Activated CD8-positive, alpha-beta T cell treated with anti-CD3 and anti-CD28 coated beads, Interleukin-2, amount 10 ng/mL, durations not matched to agents 7 days and 5 days (primary cell): ENCODE measurements at regions of chr7 and their contacts with region 1.

Region 1: GRCh38 chr7:2508327-2509215 is 11.0 kb upstream of the LFNG start:
- DNase-seq: peak; percentile 92
- ATAC-seq: peak; percentile 76
- H3K4me3 Mint-ChIP-seq: peak overlapping the region; percentile 70
- H3K27ac Mint-ChIP-seq: peak overlapping the region; percentile 92
- H3K4me1 Mint-ChIP-seq: peaks cover 62% of the 10 kb centered on the region
- H3K27me3 Mint-ChIP-seq: no peaks in the 10 kb centered on the region

Region 2: DNA sequence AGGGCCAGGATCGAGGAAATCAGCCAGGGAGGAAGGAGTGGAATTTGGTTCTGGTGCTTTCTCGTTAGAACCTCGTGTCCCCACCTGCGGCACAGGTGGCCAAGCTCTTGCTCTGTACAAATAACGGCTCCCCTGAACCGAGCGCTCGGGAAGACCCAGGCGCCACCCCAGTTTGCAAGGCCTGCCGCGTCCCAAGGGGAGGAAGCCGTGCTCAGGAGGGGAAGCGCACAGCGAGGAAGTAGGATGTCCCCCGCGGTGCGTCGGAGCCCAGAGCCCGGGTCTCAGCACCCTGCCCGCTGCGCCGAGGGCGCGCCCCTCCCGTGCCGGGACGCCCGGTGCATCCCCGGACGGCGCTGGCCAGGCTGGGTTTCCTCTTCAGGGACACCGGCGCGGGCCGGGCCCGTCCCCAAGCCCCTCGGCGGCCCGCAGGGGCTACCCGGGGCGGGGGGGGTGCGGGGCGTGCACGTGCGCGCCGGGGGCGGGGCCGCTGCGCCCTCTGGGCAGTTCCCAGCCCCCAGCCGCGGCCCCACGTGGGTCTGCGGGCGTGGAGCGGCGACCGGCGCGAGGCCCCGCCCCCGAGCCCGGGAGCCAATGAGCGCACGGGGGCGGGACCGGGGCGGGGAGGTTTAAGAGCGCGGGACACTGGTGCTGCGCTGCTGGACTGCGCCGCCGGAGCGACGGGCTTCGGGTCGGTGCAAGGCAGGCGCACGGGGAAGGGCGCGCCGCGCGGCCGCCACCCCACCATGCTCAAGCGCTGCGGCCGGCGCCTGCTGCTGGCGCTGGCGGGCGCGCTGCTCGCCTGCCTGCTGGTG is 10.8 kb after region 1 on chr7 and contains the start of gene LFNG:
- CTCF ChIA-PET with region 1: interaction called, 7 read pairs
- POLR2A ChIA-PET with region 1: interaction called, 57 read pairs
- DNase-seq: peak; percentile 90
- ATAC-seq: peak; percentile 75
- H3K4me3 Mint-ChIP-seq: peak within 1 kb of the TSS; percentile 98
- H3K27ac Mint-ChIP-seq: peak within 1 kb of the TSS; percentile 87
- H3K4me1 Mint-ChIP-seq: peaks cover 29% of the 10 kb centered on the region
- H3K27me3 Mint-ChIP-seq: no peaks in the 10 kb centered on the region
- total RNA-seq, gene LFNG: 134 to 136 TPM

Region 3: DNA sequence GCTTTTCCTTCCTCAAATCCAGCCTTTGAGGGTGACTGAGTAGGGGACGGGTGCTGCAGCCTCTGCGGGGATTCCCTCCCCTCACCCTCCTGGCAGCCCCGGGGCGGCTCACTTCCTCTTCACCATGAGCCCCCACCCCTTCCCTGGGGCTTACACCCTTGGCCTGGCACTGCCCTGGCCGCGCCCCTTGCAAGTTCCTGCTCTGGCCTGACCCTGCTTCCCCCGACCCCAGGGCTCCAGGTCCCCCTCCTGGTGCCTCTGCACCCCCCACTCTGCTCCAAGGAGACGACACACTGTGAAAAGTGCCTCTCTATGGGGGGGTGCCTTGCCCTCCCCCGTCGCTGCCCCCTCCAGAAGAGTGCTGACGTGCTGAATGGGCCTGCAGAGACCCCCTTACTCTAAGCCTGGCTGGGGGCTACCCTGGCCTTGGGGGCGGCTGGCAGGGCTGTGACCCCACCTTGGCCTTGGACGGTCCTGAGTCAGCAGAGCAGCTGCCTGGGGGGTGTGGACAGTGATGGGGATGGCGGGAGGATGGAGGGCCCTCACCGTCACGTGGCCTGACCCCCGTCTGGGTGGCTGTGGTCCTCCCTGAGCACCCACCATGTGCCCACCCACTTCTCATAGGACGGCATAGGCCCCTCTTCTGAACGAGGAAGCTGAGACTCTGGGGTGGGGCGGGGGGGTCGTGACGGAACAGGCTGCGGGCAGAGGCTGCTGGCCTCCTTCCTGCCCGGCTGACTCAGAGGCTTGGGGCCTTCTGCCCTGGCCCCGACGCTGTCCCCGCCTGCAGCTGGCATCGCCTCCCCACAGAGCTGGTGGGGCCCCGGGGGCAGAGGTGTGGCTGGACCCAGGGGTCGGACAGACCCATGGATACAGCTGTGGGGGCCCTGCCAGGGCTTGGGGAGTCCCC is 20.8 kb after region 1 on chr7:
- CTCF ChIA-PET with region 1: interaction called, 5 read pairs
- POLR2A ChIA-PET with region 1: interaction called, 12 read pairs
- DNase-seq: peak; percentile 69
- ATAC-seq: peak; percentile 34
- H3K4me3 Mint-ChIP-seq: peak overlapping the region; percentile 68
- H3K27ac Mint-ChIP-seq: peak overlapping the region; percentile 90
- H3K4me1 Mint-ChIP-seq: peaks cover 64% of the 10 kb centered on the region
- H3K27me3 Mint-ChIP-seq: no peaks in the 10 kb centered on the region

Region 4: DNA sequence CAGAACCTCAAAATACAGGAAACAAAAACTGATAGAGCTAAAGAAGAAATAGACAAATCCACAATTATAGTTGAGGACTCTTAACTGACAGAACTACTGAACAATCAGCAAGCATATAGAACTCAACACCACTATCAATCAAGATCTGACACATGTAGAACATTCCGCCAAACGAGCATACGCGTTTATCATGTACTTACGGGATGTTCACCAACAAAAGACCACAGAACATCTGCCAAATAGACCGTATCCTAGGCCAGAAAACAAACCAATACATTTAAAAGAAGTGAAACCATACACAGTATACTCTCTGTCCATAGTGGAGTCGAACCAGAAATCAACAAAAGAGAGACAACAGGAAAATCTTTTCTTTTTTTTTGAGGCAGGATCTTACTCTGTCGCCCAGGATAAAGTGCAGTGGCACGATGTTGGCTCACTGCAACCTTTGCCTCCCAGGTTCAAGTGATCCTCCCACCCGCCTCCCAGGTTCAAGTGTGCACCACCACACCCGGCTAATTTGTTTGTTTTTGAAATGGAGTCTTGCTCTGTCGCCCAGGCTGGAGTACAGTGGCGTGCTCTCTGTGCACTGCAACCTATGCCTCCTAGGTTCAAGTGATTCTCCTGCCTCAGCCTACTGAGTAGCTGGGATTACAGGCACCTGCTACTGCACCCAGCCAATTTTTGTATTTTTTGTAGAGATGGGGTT is 330.5 kb after region 1 on chr7:
- CTCF ChIA-PET with region 1: no interaction called
- POLR2A ChIA-PET with region 1: no interaction called
- DNase-seq: no peak
- ATAC-seq: no peak
- H3K4me3 Mint-ChIP-seq: no peak overlapping the region
- H3K27ac Mint-ChIP-seq: no peak overlapping the region
- H3K4me1 Mint-ChIP-seq: peaks cover 36% of the 10 kb centered on the region
- H3K27me3 Mint-ChIP-seq: no peaks in the 10 kb centered on the region